Natural killer cell (primary cell): ENCODE measurements at regions of chr9 and their contacts with region 1.

Region 1: GRCh38 chr9:79955300-79955699 is 383.5 kb downstream of the TLE4 start:
- DNase-seq: peak in 1 of 2 donors; percentile 13
- ATAC-seq: no peak
- H3K4me3 ChIP-seq: no peak overlapping the region
- H3K4me3 Mint-ChIP-seq: no peak overlapping the region
- H3K27ac ChIP-seq: no peak overlapping the region
- H3K27ac Mint-ChIP-seq: no peak overlapping the region
- H3K4me1 ChIP-seq: no peaks in the 10 kb centered on the region
- H3K4me1 Mint-ChIP-seq: no peaks in the 10 kb centered on the region
- H3K27me3 ChIP-seq: no peaks in the 10 kb centered on the region
- H3K27me3 Mint-ChIP-seq: peaks cover 7 to 17% of the 10 kb centered on the region in 2 donors
- CTCF ChIP-seq: peak; percentile 51

Region 2: GRCh38 chr9:78439190-78439865 is 1516.0 kb before region 1 on chr9:
- intact Hi-C with region 1: loop called (anchors 10 kb)
- DNase-seq: peak; percentile 45 to 79
- ATAC-seq: peak; percentile 71 to 89 (median 76)
- H3K4me3 ChIP-seq: no peak overlapping the region
- H3K4me3 Mint-ChIP-seq: no peak overlapping the region
- H3K27ac ChIP-seq: no peak overlapping the region
- H3K27ac Mint-ChIP-seq: no peak overlapping the region
- H3K4me1 ChIP-seq: peaks cover 7% of the 10 kb centered on the region
- H3K4me1 Mint-ChIP-seq: peaks cover 4 to 7% of the 10 kb centered on the region in 2 donors
- H3K27me3 ChIP-seq: peaks cover 4% of the 10 kb centered on the region
- H3K27me3 Mint-ChIP-seq: peaks cover 14 to 38% of the 10 kb centered on the region in 2 donors
- CTCF ChIP-seq: peak; percentile 90

Region 3: GRCh38 chr9:79477955-79478771 is 477.1 kb before region 1 on chr9:
- intact Hi-C with region 1: loop called (anchors 5 kb)
- DNase-seq: peak in 1 of 2 donors; percentile 61
- ATAC-seq: peak in 1 of 3 donors; percentile 63
- H3K4me3 ChIP-seq: no peak overlapping the region
- H3K4me3 Mint-ChIP-seq: no peak overlapping the region
- H3K27ac ChIP-seq: no peak overlapping the region
- H3K27ac Mint-ChIP-seq: no peak overlapping the region
- H3K4me1 ChIP-seq: no peaks in the 10 kb centered on the region
- H3K4me1 Mint-ChIP-seq: peaks cover 4 to 5% of the 10 kb centered on the region in 2 donors
- H3K27me3 ChIP-seq: no peaks in the 10 kb centered on the region
- H3K27me3 Mint-ChIP-seq: no peaks in the 10 kb centered on the region
- CTCF ChIP-seq: no peak